Psoas muscle (tissue), 8 donors: ENCODE measurements at regions of chr3 and their contacts with region 1.

Region 1: DNA sequence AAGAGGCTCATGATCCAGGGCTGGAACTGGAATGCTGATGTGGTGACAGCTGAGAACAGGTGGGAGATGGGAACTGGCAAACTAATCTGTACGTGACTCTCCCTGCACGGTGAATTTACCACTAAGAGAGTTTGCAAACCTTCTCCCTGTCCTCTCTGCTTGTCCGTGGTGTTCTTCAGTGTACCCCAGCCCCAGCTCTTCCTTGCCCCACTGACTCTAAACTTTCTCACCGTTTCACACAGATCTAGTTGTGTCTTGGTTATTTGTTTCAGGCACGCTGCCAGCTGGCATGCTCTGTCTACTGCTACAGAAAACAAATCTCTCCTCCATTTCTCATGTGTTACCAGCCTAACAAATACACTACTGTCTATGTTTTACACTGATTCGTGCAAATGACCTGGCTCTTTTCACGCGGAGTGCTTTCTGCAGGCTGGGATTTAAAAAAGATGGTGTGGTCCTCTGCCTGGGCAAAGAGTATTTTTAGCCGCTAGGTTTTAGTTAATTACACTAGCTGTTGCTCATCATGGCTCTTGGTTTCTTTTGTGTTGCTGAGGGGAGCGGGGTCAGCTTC is 192.7 kb upstream of the LRIG1 start:
- DNase-seq: peak; percentile 34 to 68
- ATAC-seq: peak; percentile 93 to 98 (median 96)
- H3K4me3 ChIP-seq: peak overlapping the region; percentile 50
- H3K27ac ChIP-seq: peak overlapping the region; percentile 83
- H3K4me1 ChIP-seq: peaks cover 18% of the 10 kb centered on the region
- H3K27me3 ChIP-seq: no peaks in the 10 kb centered on the region
- CTCF ChIP-seq: no peak

Region 2: GRCh38 chr3:66816090-66816761 is 122.7 kb after region 1 on chr3:
- intact Hi-C with region 1: loop called in 1 of 2 experiments (anchors 10 kb)
- DNase-seq: no peak
- ATAC-seq: peak; percentile 84 to 95 (median 89)
- H3K4me3 ChIP-seq: no peak overlapping the region
- H3K27ac ChIP-seq: no peak overlapping the region
- H3K4me1 ChIP-seq: no peaks in the 10 kb centered on the region
- H3K27me3 ChIP-seq: no peaks in the 10 kb centered on the region
- CTCF ChIP-seq: peak; percentile 72